ENCODE measurements at regions of chr13 and their contacts with region 1.

Region 1: DNA sequence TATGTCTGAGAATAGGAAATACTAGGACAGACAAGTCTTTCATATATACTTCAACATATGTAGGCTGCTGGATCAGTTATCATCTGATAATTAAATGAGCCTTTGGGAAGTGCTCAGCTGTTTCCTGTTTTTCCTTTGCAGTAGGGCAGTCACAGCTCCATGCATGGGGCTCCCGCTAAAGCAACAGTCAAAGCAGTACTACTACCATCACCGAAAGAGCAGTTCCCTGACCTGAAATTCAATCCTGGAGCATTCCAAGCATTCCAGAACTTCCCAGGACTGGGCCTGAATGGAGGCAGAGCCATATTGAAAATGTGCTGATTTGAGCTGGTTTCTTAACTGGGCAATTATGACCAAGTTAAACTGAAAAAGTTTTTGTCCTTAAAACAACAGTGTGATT is 20.5 kb downstream of the MICU2 start:
- DNase-seq: peak; percentile 66
- ATAC-seq: peak; percentile 89
- H3K4me3 ChIP-seq: no peak overlapping the region
- H3K27ac ChIP-seq: no peak overlapping the region
- H3K4me1 ChIP-seq: peaks cover 6% of the 10 kb centered on the region
- H3K27me3 ChIP-seq: no peaks in the 10 kb centered on the region
- CTCF ChIP-seq: no peak
- POLR2A ChIP-seq: no peak
- RAD21 ChIP-seq: no peak

Region 2: DNA sequence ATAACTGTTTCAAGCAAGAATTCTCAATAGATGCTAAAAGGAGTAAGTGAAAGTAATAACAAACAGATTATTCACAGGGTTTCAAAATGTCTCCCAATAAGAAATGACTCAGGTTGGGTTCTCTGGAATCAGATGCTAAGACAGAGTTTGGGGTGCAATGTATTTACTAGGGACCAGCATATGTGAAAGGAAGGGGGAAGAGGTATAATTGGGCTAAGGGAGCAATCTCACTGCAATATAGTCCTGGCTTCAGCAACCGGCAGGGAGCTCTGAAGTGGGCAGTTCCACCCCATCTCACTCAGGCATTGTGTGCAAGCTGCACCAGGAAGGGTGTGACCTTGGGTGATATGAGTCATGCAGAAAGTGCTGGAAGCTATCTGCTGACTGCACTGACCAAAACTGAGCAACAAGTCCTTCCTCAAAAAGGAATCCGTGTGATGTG is 147.7 kb before region 1 on chr13:
- CTCF ChIA-PET with region 1: no interaction called
- POLR2A ChIA-PET with region 1: no interaction called
- dilution Hi-C with region 1: no loop called
- in situ Hi-C with region 1: no loop called
- intact Hi-C with region 1: no loop called
- DNase-seq: peak; percentile 89
- ATAC-seq: peak; percentile 98
- H3K4me3 ChIP-seq: no peak overlapping the region
- H3K27ac ChIP-seq: no peak overlapping the region
- H3K4me1 ChIP-seq: 0 out of 2 replicates have a peak, but pooled peaks cover 2% of the 10 kb centered on the region
- H3K27me3 ChIP-seq: no peaks in the 10 kb centered on the region
- CTCF ChIP-seq: no peak
- POLR2A ChIP-seq: no peak
- RAD21 ChIP-seq: no peak

Region 3: DNA sequence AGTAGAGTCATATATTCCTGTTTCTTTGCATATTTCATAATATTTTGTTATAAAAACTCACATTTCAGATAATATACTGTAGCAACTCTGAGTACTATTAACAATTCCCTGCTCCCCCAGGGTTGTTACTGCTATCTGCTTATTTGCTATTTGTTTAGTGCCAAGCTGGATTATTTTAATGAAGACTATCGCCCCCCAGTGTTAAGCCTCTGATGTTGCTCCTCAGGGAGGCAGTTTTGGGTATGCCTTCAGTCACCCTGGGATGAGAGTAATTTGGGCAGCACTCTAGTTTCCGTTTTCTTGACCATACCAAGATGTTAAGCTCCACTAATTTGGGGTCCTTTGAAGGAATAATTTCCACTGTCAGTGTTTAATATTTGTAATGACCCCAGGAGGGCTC is 25.5 kb before region 1 on chr13:
- CTCF ChIA-PET with region 1: no interaction called
- POLR2A ChIA-PET with region 1: no interaction called
- dilution Hi-C with region 1: no loop called
- in situ Hi-C with region 1: no loop called
- intact Hi-C with region 1: loop called (anchors 1 kb)
- DNase-seq: no peak
- ATAC-seq: no peak
- H3K4me3 ChIP-seq: no peak overlapping the region
- H3K27ac ChIP-seq: no peak overlapping the region
- H3K4me1 ChIP-seq: no peaks in the 10 kb centered on the region
- H3K27me3 ChIP-seq: no peaks in the 10 kb centered on the region
- CTCF ChIP-seq: 0 out of 2 replicates have a peak, but pooled peaks have one; percentile 31
- POLR2A ChIP-seq: no peak
- RAD21 ChIP-seq: no peak